AG04449 (cell line): ENCODE measurements at regions of chr9 and their contacts with region 1.

Region 1: GRCh38 chr9:90124961-90125360 is 517.7 kb downstream of the DIRAS2 start:
- DNase-seq: no peak
- H3K4me3 ChIP-seq: no peak overlapping the region
- CTCF ChIP-seq: no peak

Region 2: GRCh38 chr9:89878687-89879086 is 246.3 kb before region 1 on chr9:
- CTCF ChIA-PET with region 1: no interaction called
- POLR2A ChIA-PET with region 1: no interaction called
- DNase-seq: no peak
- H3K4me3 ChIP-seq: no peak overlapping the region
- CTCF ChIP-seq: no peak

Region 3: GRCh38 chr9:90102292-90102901 is 22.6 kb before region 1 on chr9:
- CTCF ChIA-PET with region 1: interaction called, 10 read pairs
- POLR2A ChIA-PET with region 1: no interaction called
- DNase-seq: peak; percentile 47
- H3K4me3 ChIP-seq: no peak overlapping the region
- CTCF ChIP-seq: peak; percentile 68

Region 4: GRCh38 chr9:90112788-90113187 is 12.2 kb before region 1 on chr9:
- CTCF ChIA-PET with region 1: no interaction called
- POLR2A ChIA-PET with region 1: no interaction called
- DNase-seq: no peak
- H3K4me3 ChIP-seq: no peak overlapping the region
- CTCF ChIP-seq: no peak